Activated CD4-positive, alpha-beta memory T cell treated with anti-CD3 and anti-CD28 coated beads for 36 hours (primary cell): ENCODE measurements at regions of chr1 and their contacts with region 1.

Region 1: DNA sequence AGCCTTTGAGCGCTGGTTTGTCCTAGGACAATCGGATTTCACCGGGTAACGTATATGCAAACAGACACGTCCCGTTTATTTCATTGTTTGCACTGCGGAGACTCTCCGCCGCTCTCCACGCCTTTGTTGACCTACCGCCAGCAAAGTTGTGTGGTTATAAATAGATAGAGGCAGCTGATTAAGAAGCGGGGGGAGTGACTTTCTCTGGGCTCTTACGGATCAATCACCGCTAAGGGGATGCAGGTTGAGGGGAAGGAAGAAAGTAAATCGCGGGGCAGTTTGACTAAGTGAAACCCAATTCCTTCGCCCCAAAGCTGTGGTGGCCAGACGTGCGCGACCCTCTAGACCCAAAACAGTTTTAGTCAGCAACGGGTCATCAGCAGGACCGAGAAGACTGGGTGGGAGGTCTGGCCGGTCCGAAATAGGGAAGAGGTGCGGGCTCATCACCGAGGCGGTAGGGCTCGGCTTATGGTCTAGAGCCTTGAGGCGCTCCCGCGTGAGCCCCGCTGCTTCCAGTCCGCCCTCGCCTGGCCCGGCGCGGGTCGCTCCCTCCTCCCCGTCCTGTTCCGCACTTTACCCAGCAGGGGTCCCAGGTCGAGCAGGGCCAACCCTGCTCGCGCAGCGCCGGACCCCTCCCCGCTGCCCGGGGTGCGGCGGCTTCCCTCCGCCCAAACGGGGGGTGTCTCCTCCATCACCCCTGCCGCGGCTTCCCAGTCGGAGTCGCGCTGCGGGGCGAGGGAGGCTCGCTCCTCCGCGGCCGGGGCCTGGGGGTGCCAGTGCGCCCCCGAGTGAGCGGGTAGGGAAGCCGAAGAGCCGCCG is 120.8 kb upstream of the RRP15 start:
- DNase-seq: peak; percentile 10
- H3K4me3 Mint-ChIP-seq: peak overlapping the region; percentile 64
- H3K27ac Mint-ChIP-seq: no peak overlapping the region
- H3K4me1 Mint-ChIP-seq: peaks cover 19% of the 10 kb centered on the region
- H3K27me3 Mint-ChIP-seq: peaks cover 53% of the 10 kb centered on the region

Region 2: GRCh38 chr1:217134857-217135568 is 1029.3 kb before region 1 on chr1:
- CTCF ChIA-PET with region 1: no interaction called
- POLR2A ChIA-PET with region 1: no interaction called
- intact Hi-C with region 1: loop called (anchors 10 kb)
- DNase-seq: no peak
- H3K4me3 Mint-ChIP-seq: no peak overlapping the region
- H3K27ac Mint-ChIP-seq: no peak overlapping the region
- H3K4me1 Mint-ChIP-seq: peaks cover 6% of the 10 kb centered on the region
- H3K27me3 Mint-ChIP-seq: peaks cover 63% of the 10 kb centered on the region

Region 3: GRCh38 chr1:218123968-218124367 is 40.4 kb before region 1 on chr1:
- CTCF ChIA-PET with region 1: no interaction called
- POLR2A ChIA-PET with region 1: no interaction called
- intact Hi-C with region 1: no loop called
- DNase-seq: no peak
- H3K4me3 Mint-ChIP-seq: no peak overlapping the region
- H3K27ac Mint-ChIP-seq: no peak overlapping the region
- H3K4me1 Mint-ChIP-seq: no peaks in the 10 kb centered on the region
- H3K27me3 Mint-ChIP-seq: no peaks in the 10 kb centered on the region